ENCODE measurements at regions of chr18 and their contacts with region 1.

Region 1: DNA sequence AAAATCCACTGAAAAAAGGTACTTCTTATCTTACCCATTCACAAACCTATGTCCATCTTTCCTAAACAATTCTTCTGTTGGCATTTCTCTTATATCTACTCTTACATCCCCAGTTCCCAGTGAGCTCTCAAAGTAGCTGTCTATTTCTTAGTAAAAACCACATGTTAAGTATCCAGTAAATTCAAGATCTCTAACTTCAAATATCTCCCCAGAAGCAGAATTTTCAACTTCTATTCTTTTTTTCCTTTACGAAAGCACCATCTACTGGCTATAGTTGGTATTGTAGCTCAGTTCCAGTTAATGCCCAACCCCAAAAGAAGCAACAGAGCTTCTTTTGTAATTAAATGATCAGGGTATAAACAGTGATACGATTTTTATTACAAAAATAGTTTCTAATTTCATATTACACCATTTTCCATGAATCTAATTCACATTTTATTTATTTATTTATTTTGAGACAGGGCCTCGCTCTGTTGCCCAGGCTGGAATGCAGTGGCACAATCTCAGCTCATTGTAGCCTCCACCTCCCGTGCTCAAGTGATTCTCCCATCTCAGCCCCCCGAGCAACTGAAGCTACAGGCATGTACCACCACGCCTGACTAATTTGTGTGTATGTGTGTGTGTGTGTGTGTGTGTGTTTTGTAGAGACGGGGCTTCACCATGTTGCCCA is 28.5 kb downstream of the HRH4 start:
- DNase-seq: no peak
- ATAC-seq: peak; percentile 51 to 79 (median 73)
- H3K4me3 ChIP-seq: no peak overlapping the region
- H3K27ac ChIP-seq: no peak overlapping the region
- H3K4me1 ChIP-seq: no peaks in the 10 kb centered on the region
- H3K27me3 ChIP-seq: no peaks in the 10 kb centered on the region
- CTCF ChIP-seq: peak; percentile 73 to 79 (median 76)
- POLR2A ChIP-seq: no peak

Region 2: DNA sequence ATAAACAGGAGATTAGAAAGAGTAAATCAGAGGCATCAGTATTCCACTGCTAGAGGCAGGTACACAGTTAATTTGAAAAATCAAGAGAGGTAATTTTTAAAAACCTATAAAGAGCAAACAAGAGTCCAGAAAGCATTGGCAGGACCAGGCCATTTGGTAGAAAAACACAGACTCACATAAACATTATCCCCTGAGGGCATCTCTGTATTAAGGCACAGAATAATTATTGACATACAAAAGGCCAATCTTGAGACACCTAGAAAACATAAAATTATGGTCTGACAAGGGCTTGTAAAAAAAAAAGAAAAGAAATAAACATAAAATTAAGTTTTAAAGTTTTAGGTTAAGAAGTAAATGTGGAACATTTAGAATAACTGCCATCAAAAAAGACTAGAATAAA is 212.0 kb before region 1 on chr18:
- intact Hi-C with region 1: no loop called
- DNase-seq: no peak
- ATAC-seq: no peak
- H3K4me3 ChIP-seq: no peak overlapping the region
- H3K27ac ChIP-seq: no peak overlapping the region
- H3K4me1 ChIP-seq: peaks cover 0 to 7% (median 2%) of the 10 kb centered on the region in 4 donors
- H3K27me3 ChIP-seq: no peaks in the 10 kb centered on the region
- CTCF ChIP-seq: no peak
- POLR2A ChIP-seq: no peak

Region 3: GRCh38 chr18:24354286-24354685 is 134.7 kb before region 1 on chr18:
- intact Hi-C with region 1: loop called in 1 of 2 experiments (anchors 10 kb)
- DNase-seq: no peak
- ATAC-seq: no peak
- H3K4me3 ChIP-seq: no peak overlapping the region
- H3K27ac ChIP-seq: no peak overlapping the region
- H3K4me1 ChIP-seq: no peaks in the 10 kb centered on the region
- H3K27me3 ChIP-seq: no peaks in the 10 kb centered on the region
- CTCF ChIP-seq: no peak
- POLR2A ChIP-seq: no peak

Region 4: DNA sequence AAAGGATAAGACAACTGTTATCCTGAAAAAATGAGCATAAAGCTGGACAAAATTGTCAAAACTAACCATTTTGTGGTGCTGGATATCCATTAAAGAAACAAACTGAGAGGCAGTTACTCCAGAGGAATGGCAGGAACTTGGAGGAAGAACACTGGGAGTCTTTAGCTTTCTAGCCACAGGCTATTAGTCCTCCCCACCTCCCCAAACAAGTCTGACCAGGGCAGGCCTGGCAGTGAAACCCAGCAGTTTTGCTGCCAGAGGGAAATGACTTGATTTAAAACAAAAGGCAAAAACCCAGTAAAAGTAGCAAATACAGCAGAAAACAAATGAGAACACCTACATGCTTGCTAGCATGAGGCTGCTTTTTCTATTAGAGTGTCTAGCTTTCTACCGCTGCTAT is 126.2 kb before region 1 on chr18:
- intact Hi-C with region 1: loop called (anchors 5 to 10 kb)
- DNase-seq: no peak
- ATAC-seq: no peak
- H3K4me3 ChIP-seq: no peak overlapping the region
- H3K27ac ChIP-seq: no peak overlapping the region
- H3K4me1 ChIP-seq: no peaks in the 10 kb centered on the region
- H3K27me3 ChIP-seq: no peaks in the 10 kb centered on the region
- CTCF ChIP-seq: no peak
- POLR2A ChIP-seq: no peak

Region 5: DNA sequence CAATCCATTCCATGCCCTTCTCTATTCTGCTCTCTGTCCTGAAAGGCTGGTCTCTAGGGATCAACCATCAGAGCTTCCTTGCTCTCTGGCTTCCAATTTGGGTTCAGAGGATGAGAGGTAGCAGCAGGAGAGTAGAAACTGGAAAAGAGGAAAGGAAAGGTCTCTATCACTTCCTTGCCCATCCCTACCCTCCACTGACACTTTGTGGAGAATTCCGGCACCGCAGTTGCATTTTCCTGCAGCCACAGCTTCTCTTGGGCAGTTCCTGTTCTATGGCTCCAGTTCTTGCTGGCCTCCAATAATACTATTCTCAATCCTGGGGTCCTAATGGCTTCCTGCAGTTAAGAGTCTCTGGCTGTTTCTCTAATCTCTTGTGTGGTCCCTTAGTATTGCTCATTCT is 75.8 kb before region 1 on chr18:
- intact Hi-C with region 1: no loop called
- DNase-seq: no peak
- ATAC-seq: peak in 1 of 4 donors; percentile 78
- H3K4me3 ChIP-seq: no peak overlapping the region
- H3K27ac ChIP-seq: no peak overlapping the region
- H3K4me1 ChIP-seq: no peaks in the 10 kb centered on the region
- H3K27me3 ChIP-seq: no peaks in the 10 kb centered on the region
- CTCF ChIP-seq: peak; percentile 4 to 19 (median 10)
- POLR2A ChIP-seq: no peak

Region 6: GRCh38 chr18:24560511-24560981 is 71.6 kb after region 1 on chr18:
- intact Hi-C with region 1: no loop called
- DNase-seq: no peak
- ATAC-seq: no peak
- H3K4me3 ChIP-seq: no peak overlapping the region
- H3K27ac ChIP-seq: no peak overlapping the region
- H3K4me1 ChIP-seq: no peaks in the 10 kb centered on the region
- H3K27me3 ChIP-seq: no peaks in the 10 kb centered on the region
- CTCF ChIP-seq: no peak
- POLR2A ChIP-seq: no peak

Measured in right lobe of liver (tissue), 6 donors.